ENCODE measurements at regions of chr6 and their contacts with region 1.

Region 1: GRCh38 chr6:105317607-105318533 is 85.0 kb downstream of the PREP start:
- DNase-seq: peak; percentile 15
- ATAC-seq: peak; percentile 78
- H3K4me3 ChIP-seq: no peak overlapping the region
- H3K27ac ChIP-seq: no peak overlapping the region
- H3K4me1 ChIP-seq: peaks cover 5 to 20% of the 10 kb centered on the region in 2 experiments; a peak in 3 of 4 replicates
- H3K27me3 ChIP-seq: no peaks in the 10 kb centered on the region
- CTCF ChIP-seq: peak; percentile 71 to 76 (median 72); a peak in 5 of 6 replicates
- POLR2A ChIP-seq: no peak
- RAD21 ChIP-seq: peak; percentile 71

Region 2: DNA sequence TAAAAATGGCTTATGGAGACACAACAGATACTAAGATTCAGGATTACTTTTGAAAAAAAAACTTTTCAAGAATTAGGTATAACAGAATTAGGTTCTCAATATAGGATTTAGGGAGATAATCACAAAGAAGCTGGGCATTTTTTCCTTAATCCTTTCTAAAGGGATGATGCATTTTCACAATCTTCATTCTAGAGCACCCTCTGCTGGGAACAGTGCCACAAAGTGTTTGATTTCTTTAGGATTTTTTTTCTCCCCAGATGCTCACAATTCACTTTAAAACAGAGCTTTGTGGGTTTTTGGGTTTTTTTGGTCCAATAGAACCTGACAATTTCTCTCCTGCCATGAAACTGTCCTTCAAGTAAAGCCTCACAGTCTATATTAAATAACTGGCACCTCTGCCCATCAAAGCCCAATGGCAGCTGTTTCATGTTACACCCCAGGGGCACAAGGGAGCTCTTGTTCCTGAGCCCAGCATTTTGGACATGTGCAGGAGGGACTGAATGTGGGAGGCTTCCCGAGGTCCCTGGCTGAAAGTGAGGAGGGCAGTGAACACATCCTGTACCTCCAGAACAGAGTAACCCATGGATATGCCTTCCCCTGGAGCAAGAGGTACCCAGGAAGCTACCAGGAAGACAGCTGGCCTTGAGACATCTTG is 45.4 kb after region 1 on chr6:
- CTCF ChIA-PET with region 1: interaction called, 25 read pairs
- POLR2A ChIA-PET with region 1: interaction called, 5 read pairs
- RAD21 ChIA-PET with region 1: interaction called, 5 to 9 read pairs
- intact Hi-C with region 1: loop called (anchors 2 kb)
- DNase-seq: no peak
- ATAC-seq: no peak
- H3K4me3 ChIP-seq: no peak overlapping the region
- H3K27ac ChIP-seq: no peak overlapping the region
- H3K4me1 ChIP-seq: peaks cover 0 to 12% of the 10 kb centered on the region in 2 experiments; a peak in 2 of 4 replicates
- H3K27me3 ChIP-seq: no peaks in the 10 kb centered on the region
- CTCF ChIP-seq: peak; percentile 36 to 69 (median 53); a peak in 4 of 6 replicates
- POLR2A ChIP-seq: no peak
- RAD21 ChIP-seq: peak; percentile 76

Region 3: GRCh38 chr6:105389543-105389942 is 71.7 kb after region 1 on chr6:
- CTCF ChIA-PET with region 1: no interaction called
- POLR2A ChIA-PET with region 1: no interaction called
- RAD21 ChIA-PET with region 1: no interaction called
- intact Hi-C with region 1: no loop called
- DNase-seq: no peak
- ATAC-seq: no peak
- H3K4me3 ChIP-seq: no peak overlapping the region
- H3K27ac ChIP-seq: no peak overlapping the region
- H3K4me1 ChIP-seq: peaks cover 5% of the 10 kb centered on the region in 2 experiments
- H3K27me3 ChIP-seq: no peaks in the 10 kb centered on the region
- CTCF ChIP-seq: no peak
- POLR2A ChIP-seq: no peak
- RAD21 ChIP-seq: no peak

Region 4: GRCh38 chr6:105402939-105403935 is 85.4 kb after region 1 on chr6 and contains the start of gene PREP:
- CTCF ChIA-PET with region 1: interaction called, 4 read pairs
- POLR2A ChIA-PET with region 1: interaction called, 4 read pairs
- RAD21 ChIA-PET with region 1: interaction called in 1 of 2 experiments, 4 read pairs
- intact Hi-C with region 1: loop called (anchors 2 kb)
- DNase-seq: peak; percentile 72
- ATAC-seq: peak; percentile 92
- H3K4me3 ChIP-seq: peak within 1 kb of the TSS; percentile 82 to 94
- H3K27ac ChIP-seq: peak within 1 kb of the TSS; percentile 84
- H3K4me1 ChIP-seq: peaks cover 6 to 20% of the 10 kb centered on the region in 2 experiments; a peak in 3 of 4 replicates
- H3K27me3 ChIP-seq: no peaks in the 10 kb centered on the region
- CTCF ChIP-seq: peak; percentile 67 to 88 (median 81); a peak in 5 of 6 replicates
- POLR2A ChIP-seq: no peak
- RAD21 ChIP-seq: peak; percentile 58
- total RNA-seq, gene PREP: 53.5 TPM

Region 5: GRCh38 chr6:105424175-105424783 is 106.4 kb after region 1 on chr6:
- CTCF ChIA-PET with region 1: no interaction called
- POLR2A ChIA-PET with region 1: no interaction called
- RAD21 ChIA-PET with region 1: no interaction called
- intact Hi-C with region 1: loop called (anchors 5 kb)
- DNase-seq: peak; percentile 62
- ATAC-seq: peak; percentile 82
- H3K4me3 ChIP-seq: no peak overlapping the region
- H3K27ac ChIP-seq: no peak overlapping the region
- H3K4me1 ChIP-seq: peaks cover 12 to 14% of the 10 kb centered on the region in 2 experiments; a peak in 3 of 4 replicates
- H3K27me3 ChIP-seq: no peaks in the 10 kb centered on the region
- CTCF ChIP-seq: peak; percentile 58 to 82 (median 62); a peak in 5 of 6 replicates
- POLR2A ChIP-seq: no peak
- RAD21 ChIP-seq: peak; percentile 63